ENCODE measurements at regions of chr3 and their contacts with region 1.

Region 1: GRCh38 chr3:40505599-40506462 is at the start of gene ZNF620:
- DNase-seq: peak; percentile 93 to 94
- H3K4me3 ChIP-seq: peak within 1 kb of the TSS; percentile 74
- H3K4me3 Mint-ChIP-seq: peak within 1 kb of the TSS; percentile 87
- H3K27ac Mint-ChIP-seq: peak within 1 kb of the TSS; percentile 89
- H3K4me1 ChIP-seq: no peaks in the 10 kb centered on the region
- H3K4me1 Mint-ChIP-seq: no peaks in the 10 kb centered on the region
- H3K27me3 ChIP-seq: no peaks in the 10 kb centered on the region
- H3K27me3 Mint-ChIP-seq: no peaks in the 10 kb centered on the region
- CTCF ChIP-seq: peak; percentile 38 to 80
- total RNA-seq, gene ZNF620: 11.9 and 12.1 TPM in 2 replicates

Region 2: GRCh38 chr3:39927479-39927878 is 578.4 kb before region 1 on chr3:
- CTCF ChIA-PET with region 1: no interaction called
- POLR2A ChIA-PET with region 1: no interaction called
- intact Hi-C with region 1: no loop called
- DNase-seq: no peak
- H3K4me3 ChIP-seq: no peak overlapping the region
- H3K4me3 Mint-ChIP-seq: no peak overlapping the region
- H3K27ac Mint-ChIP-seq: no peak overlapping the region
- H3K4me1 ChIP-seq: no peaks in the 10 kb centered on the region
- H3K4me1 Mint-ChIP-seq: no peaks in the 10 kb centered on the region
- H3K27me3 ChIP-seq: no peaks in the 10 kb centered on the region
- H3K27me3 Mint-ChIP-seq: no peaks in the 10 kb centered on the region
- CTCF ChIP-seq: no peak

Region 3: DNA sequence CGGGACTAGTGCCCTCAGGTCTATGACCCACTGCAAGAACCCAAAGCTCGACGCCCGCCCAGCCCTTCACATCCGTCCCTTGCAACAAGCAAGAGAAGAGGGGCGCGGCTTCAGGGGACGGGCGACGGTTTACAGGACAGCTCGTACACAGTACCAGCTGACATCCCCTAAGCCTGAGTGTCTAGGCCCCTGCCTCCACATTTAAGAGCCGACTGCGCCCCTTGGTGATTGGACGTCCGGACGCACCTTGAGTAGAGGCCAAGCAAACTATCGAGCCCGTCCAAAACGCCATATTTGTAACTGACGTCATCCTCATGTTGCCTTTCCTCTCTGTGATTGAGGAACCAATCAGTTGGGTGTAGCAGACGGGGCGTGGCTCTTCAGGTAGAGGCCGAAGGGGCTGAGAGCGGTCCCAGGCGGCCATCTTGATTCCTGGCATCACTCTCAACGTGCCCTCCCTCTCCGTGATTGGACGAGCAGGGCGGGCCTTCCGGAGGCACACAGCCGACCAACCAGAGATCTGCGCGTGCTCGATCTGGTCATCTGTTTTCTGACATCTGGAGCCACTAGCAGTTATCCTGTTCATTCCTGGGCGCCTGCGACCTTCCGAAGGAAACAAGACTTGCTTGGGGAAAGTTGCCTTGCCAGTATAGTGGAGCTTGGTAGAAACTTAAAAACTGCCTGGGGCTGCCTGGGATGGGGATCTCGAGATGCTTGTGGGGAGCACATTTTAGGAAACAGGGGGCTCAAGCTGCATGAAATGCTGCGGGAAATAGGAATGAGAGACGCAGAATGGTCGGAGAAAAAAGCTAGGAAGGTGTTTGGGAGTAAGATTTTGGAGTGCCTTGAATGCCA is 52.7 kb before region 1 on chr3:
- CTCF ChIA-PET with region 1: interaction called, 6 read pairs
- POLR2A ChIA-PET with region 1: interaction called, 17 read pairs
- intact Hi-C with region 1: loop called (anchors 2 kb)
- DNase-seq: peak; percentile 96 to 98
- H3K4me3 ChIP-seq: peak overlapping the region; percentile 58
- H3K4me3 Mint-ChIP-seq: peak overlapping the region; percentile 82
- H3K27ac Mint-ChIP-seq: peak overlapping the region; percentile 86
- H3K4me1 ChIP-seq: no peaks in the 10 kb centered on the region
- H3K4me1 Mint-ChIP-seq: peaks cover 13% of the 10 kb centered on the region
- H3K27me3 ChIP-seq: no peaks in the 10 kb centered on the region
- H3K27me3 Mint-ChIP-seq: no peaks in the 10 kb centered on the region
- CTCF ChIP-seq: no peak

Region 4: GRCh38 chr3:40476478-40477470 is 29.1 kb before region 1 on chr3 and contains the start of gene ZNF619:
- CTCF ChIA-PET with region 1: interaction called, 12 read pairs
- POLR2A ChIA-PET with region 1: interaction called, 8 read pairs
- intact Hi-C with region 1: loop called (anchors 2 kb)
- DNase-seq: peak; percentile 71
- H3K4me3 ChIP-seq: peak within 1 kb of the TSS; percentile 54
- H3K4me3 Mint-ChIP-seq: peak within 1 kb of the TSS; percentile 81
- H3K27ac Mint-ChIP-seq: peak within 1 kb of the TSS; percentile 88
- H3K4me1 ChIP-seq: peaks cover 3% of the 10 kb centered on the region; the same call in 1 of the 2 replicates
- H3K4me1 Mint-ChIP-seq: peaks cover 10% of the 10 kb centered on the region
- H3K27me3 ChIP-seq: no peaks in the 10 kb centered on the region
- H3K27me3 Mint-ChIP-seq: no peaks in the 10 kb centered on the region
- CTCF ChIP-seq: no peak
- total RNA-seq, gene ZNF619: 4.9 and 6.8 TPM in 2 replicates

Region 5: GRCh38 chr3:40524568-40525285 is 18.9 kb after region 1 on chr3 and contains the start of gene ZNF621:
- CTCF ChIA-PET with region 1: interaction called, 22 read pairs
- POLR2A ChIA-PET with region 1: interaction called, 22 read pairs
- intact Hi-C with region 1: loop called (anchors 1 kb)
- DNase-seq: peak; percentile 90 to 95
- H3K4me3 ChIP-seq: peak within 1 kb of the TSS; percentile 91
- H3K4me3 Mint-ChIP-seq: peak within 1 kb of the TSS; percentile 97
- H3K27ac Mint-ChIP-seq: peak within 1 kb of the TSS; percentile 99
- H3K4me1 ChIP-seq: no peaks in the 10 kb centered on the region
- H3K4me1 Mint-ChIP-seq: no peaks in the 10 kb centered on the region
- H3K27me3 ChIP-seq: no peaks in the 10 kb centered on the region
- H3K27me3 Mint-ChIP-seq: no peaks in the 10 kb centered on the region
- CTCF ChIP-seq: no peak
- total RNA-seq, gene ZNF621: 23.6 and 23.7 TPM in 2 replicates